Kidney (tissue), 22 donors: ENCODE measurements at regions of chr1 and their contacts with region 1.

Region 1: DNA sequence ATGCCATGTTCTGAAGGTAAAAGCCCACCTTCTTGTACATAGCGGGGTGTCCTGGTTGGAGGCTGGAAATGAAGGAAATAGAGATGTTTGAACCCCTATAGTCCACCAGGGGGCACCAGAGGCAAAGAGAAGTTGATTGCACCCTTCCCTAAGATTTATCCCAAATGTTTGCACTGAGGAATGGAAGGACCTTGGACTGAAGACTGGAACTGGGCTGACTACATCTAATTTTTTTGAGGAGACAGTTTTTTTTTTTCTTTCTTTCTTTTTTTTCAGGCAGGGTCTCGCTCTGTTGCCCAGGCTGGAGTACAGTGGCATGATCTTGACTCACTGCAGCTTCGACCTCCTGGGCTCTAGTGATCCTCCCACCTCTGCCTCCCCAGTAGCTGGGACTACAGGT is 55.3 kb upstream of the EIF4G3 start:
- DNase-seq: peak in 3 of 5 donors; percentile 51 to 87 (median 81)
- H3K4me3 ChIP-seq: no peak overlapping the region
- H3K27ac ChIP-seq: no peak overlapping the region
- H3K4me1 ChIP-seq: no peaks in the 10 kb centered on the region
- H3K27me3 ChIP-seq: no peaks in the 10 kb centered on the region
- CTCF ChIP-seq: peak; percentile 83

Region 2: GRCh38 chr1:21368515-21369289 is 136.7 kb after region 1 on chr1:
- intact Hi-C with region 1: loop called (anchors 5 kb)
- DNase-seq: peak; percentile 84 to 93 (median 87)
- H3K4me3 ChIP-seq: no peak overlapping the region
- H3K27ac ChIP-seq: no peak overlapping the region
- H3K4me1 ChIP-seq: peaks cover 0 to 3% (median 2%) of the 10 kb centered on the region in 3 donors
- H3K27me3 ChIP-seq: no peaks in the 10 kb centered on the region
- CTCF ChIP-seq: peak; percentile 100